ENCODE measurements at regions of chr9 and their contacts with region 1.

Region 1: GRCh38 chr9:16221366-16221765 is 649.1 kb downstream of the BNC2 start:
- DNase-seq: no peak
- H3K4me3 ChIP-seq: no peak overlapping the region
- H3K27ac ChIP-seq: no peak overlapping the region
- H3K4me1 ChIP-seq: no peaks in the 10 kb centered on the region
- H3K27me3 ChIP-seq: peaks cover 6 to 7% of the 10 kb centered on the region in 2 experiments
- CTCF ChIP-seq: no peak
- POLR2A ChIP-seq: no peak

Region 2: DNA sequence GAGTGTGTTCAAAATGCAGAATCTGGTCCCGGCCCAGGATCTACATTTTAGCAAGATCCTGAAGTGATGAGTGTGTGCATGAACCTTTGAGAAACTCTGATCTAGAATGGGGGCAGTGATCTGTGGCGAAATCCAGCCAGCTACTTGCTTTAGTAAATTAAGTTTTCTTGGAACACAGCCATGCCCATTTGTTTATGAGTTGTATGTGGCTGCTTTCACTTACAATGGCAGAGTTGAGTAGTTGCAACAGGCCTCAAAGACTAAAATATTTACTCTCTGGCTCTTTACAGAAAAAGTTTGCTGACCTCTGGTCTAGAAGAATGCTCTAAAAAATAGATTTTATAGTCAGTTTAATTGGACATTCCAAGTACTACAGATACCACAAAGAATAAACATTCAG is 60.9 kb after region 1 on chr9:
- CTCF ChIA-PET with region 1: no interaction called
- POLR2A ChIA-PET with region 1: no interaction called
- dilution Hi-C with region 1: no loop called
- intact Hi-C with region 1: loop called (anchors 5 kb)
- DNase-seq: no peak
- H3K4me3 ChIP-seq: no peak overlapping the region
- H3K27ac ChIP-seq: no peak overlapping the region
- H3K4me1 ChIP-seq: no peaks in the 10 kb centered on the region
- H3K27me3 ChIP-seq: peaks cover 0 to 6% of the 10 kb centered on the region in 2 experiments
- CTCF ChIP-seq: no peak
- POLR2A ChIP-seq: no peak